ENCODE measurements at regions of chr10 and their contacts with region 1.

Region 1: GRCh38 chr10:110671788-110672579 is 27.8 kb downstream of the RBM20 start:
- DNase-seq: peak; percentile 79
- ATAC-seq: peak; percentile 94
- H3K4me3 ChIP-seq: peak overlapping the region; percentile 63 to 77 (median 72)
- H3K4me3 Mint-ChIP-seq: peak overlapping the region; percentile 91
- H3K27ac ChIP-seq: peak overlapping the region; percentile 70 to 76
- H3K27ac Mint-ChIP-seq: peak overlapping the region; percentile 77
- H3K4me1 ChIP-seq: peaks cover 3 to 8% of the 10 kb centered on the region in 2 donors
- H3K4me1 Mint-ChIP-seq: peaks cover 2% of the 10 kb centered on the region
- H3K27me3 ChIP-seq: no peaks in the 10 kb centered on the region
- H3K27me3 Mint-ChIP-seq: peaks cover 38% of the 10 kb centered on the region
- CTCF ChIP-seq: peak; percentile 94

Region 2: GRCh38 chr10:110192552-110192951 is 479.4 kb before region 1 on chr10:
- CTCF ChIA-PET with region 1: no interaction called
- POLR2A ChIA-PET with region 1: no interaction called
- intact Hi-C with region 1: no loop called
- DNase-seq: no peak
- ATAC-seq: no peak
- H3K4me3 ChIP-seq: no peak overlapping the region
- H3K4me3 Mint-ChIP-seq: no peak overlapping the region
- H3K27ac ChIP-seq: no peak overlapping the region
- H3K27ac Mint-ChIP-seq: no peak overlapping the region
- H3K4me1 ChIP-seq: no peaks in the 10 kb centered on the region
- H3K4me1 Mint-ChIP-seq: no peaks in the 10 kb centered on the region
- H3K27me3 ChIP-seq: peaks cover 0 to 32% (median 23%) of the 10 kb centered on the region in 4 experiments
- H3K27me3 Mint-ChIP-seq: peaks cover 59% of the 10 kb centered on the region
- CTCF ChIP-seq: no peak

Region 3: GRCh38 chr10:110617425-110618229 is 54.4 kb before region 1 on chr10:
- CTCF ChIA-PET with region 1: interaction called, 13 read pairs
- POLR2A ChIA-PET with region 1: no interaction called
- intact Hi-C with region 1: no loop called
- DNase-seq: no peak
- ATAC-seq: no peak
- H3K4me3 ChIP-seq: no peak overlapping the region
- H3K4me3 Mint-ChIP-seq: no peak overlapping the region
- H3K27ac ChIP-seq: no peak overlapping the region
- H3K27ac Mint-ChIP-seq: no peak overlapping the region
- H3K4me1 ChIP-seq: peaks cover 4 to 6% of the 10 kb centered on the region in 2 donors
- H3K4me1 Mint-ChIP-seq: peaks cover 11% of the 10 kb centered on the region
- H3K27me3 ChIP-seq: no peaks in the 10 kb centered on the region
- H3K27me3 Mint-ChIP-seq: no peaks in the 10 kb centered on the region
- CTCF ChIP-seq: no peak

Region 4: DNA sequence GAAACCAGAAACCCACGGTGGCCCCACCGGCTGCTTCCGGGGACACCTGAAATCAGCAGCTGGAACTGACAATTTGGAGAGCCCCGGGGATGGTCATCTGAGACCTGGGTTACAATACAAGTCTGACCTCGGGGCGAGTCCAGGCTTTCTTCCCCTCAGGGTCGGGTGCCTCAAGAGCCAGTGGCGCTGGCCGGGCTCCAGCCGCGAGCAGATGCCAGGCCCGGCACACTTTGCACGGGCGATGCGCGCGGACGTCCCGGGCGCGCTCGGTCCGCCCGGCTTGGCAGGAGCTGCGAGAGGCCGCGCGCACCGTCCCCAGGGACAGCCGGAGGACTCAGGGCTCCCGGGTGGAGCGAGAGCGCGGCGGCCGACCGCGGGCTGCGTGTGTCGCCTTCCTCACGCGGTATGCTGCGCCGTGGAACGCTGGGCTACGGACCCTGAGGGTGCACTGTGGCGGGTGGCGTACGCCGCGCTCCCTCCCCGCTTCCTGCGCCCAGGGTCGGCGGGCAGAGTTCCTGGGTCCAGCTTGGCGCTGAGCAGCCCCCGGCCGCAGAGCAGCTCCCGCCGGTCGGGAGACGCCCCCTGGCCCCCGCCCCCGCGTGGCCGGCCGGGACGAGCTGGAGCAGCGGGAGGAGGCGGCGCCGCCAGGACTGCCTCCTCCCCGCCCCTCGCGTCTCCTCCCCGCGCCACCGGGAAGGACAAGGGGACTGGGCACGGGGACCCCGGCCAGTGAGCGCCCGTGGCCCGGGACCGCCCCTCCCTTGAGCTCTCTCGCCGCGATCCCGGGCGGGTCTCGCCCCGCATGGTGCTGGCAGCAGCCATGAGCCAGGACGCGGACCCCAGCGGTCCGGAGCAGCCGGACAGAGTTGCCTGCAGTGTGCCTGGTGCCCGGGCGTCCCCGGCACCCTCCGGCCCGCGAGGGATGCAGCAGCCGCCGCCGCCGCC is 28.1 kb before region 1 on chr10 and contains the start of gene RBM20:
- CTCF ChIA-PET with region 1: interaction called, 3 read pairs
- POLR2A ChIA-PET with region 1: no interaction called
- intact Hi-C with region 1: loop called (anchors 1 kb)
- DNase-seq: peak; percentile 48
- ATAC-seq: peak; percentile 45
- H3K4me3 ChIP-seq: peak within 1 kb of the TSS; percentile 30 to 58 (median 47)
- H3K4me3 Mint-ChIP-seq: peak within 1 kb of the TSS; percentile 84
- H3K27ac ChIP-seq: no peak within 1 kb of the TSS
- H3K27ac Mint-ChIP-seq: no peak within 1 kb of the TSS
- H3K4me1 ChIP-seq: peaks cover 18 to 30% of the 10 kb centered on the region in 2 donors
- H3K4me1 Mint-ChIP-seq: peaks cover 30% of the 10 kb centered on the region
- H3K27me3 ChIP-seq: peaks cover 0 to 53% (median 42%) of the 10 kb centered on the region in 4 experiments
- H3K27me3 Mint-ChIP-seq: peaks cover 63% of the 10 kb centered on the region
- CTCF ChIP-seq: no peak
- total RNA-seq, gene RBM20: not detected in 2 replicates

Measured in B cell (primary cell).